H1 (cell line): ENCODE measurements at regions of chr3 and their contacts with region 1.

Region 1: GRCh38 chr3:50170689-50171088 is 15.6 kb downstream of the SEMA3F start:
- DNase-seq: no peak
- H3K4me3 ChIP-seq: no peak overlapping the region
- H3K27ac ChIP-seq: no peak overlapping the region
- H3K4me1 ChIP-seq: peaks cover 0 to 22% (median 13%) of the 10 kb centered on the region in 4 experiments; a peak in 6 of 7 replicates
- H3K27me3 ChIP-seq: no peaks in the 10 kb centered on the region
- CTCF ChIP-seq: no peak
- EP300 ChIP-seq: no peak
- POLR2A ChIP-seq: no peak
- RAD21 ChIP-seq: no peak

Region 2: DNA sequence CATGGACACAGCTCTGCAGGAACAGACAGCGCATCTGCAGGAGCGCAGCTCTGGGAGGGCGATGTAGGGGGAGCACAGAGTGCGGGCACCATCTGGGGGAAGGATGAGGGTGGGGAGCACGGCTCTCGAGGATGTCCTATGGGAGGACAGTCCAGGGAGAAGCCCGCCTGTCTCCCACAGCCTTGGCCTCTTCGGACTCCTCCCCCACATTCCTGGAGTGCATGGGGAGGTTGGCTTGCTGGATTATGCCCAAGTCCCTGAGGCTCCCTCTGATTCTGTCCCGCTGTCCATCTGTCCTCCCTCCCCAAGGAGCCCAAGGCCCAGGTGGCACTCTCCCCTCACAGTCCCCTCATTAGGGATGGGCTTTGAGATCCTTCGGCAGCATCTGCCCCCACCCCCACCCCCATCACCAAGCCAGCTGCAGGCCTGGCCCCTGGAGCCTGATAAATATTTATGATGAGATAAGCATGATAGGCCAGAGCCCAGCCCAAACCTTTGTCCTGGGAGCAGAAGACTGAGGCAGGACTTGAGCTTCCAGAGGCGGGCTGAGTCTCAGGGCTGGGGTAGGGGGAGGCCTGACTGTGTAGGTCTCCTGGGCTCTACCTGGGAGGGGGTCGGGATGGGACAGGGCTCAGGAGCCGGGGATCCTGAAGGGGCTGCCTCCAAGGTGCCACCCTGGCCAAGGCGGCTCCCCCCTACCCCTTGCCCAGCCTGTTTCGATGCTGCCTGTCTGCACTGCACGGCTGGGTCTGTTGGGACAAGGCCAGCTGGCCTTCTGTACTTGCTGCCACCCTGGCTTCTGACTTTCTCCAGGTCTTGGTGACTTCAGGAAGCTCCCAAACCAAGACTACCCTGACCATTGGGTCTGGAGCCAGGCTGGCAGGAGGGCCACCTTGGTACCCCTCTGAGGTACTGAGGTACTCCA is 44.1 kb before region 1 on chr3:
- CTCF ChIA-PET with region 1: interaction called, 190 read pairs
- POLR2A ChIA-PET with region 1: interaction called, 34 read pairs
- DNase-seq: peak in 1 of 2 experiments; percentile 58
- H3K4me3 ChIP-seq: no peak overlapping the region
- H3K27ac ChIP-seq: no peak overlapping the region; the same call in none of the 2 replicates
- H3K4me1 ChIP-seq: peaks cover 4 to 32% (median 23%) of the 10 kb centered on the region in 4 experiments
- H3K27me3 ChIP-seq: no peaks in the 10 kb centered on the region
- CTCF ChIP-seq: no peak
- EP300 ChIP-seq: no peak
- POLR2A ChIP-seq: no peak
- RAD21 ChIP-seq: no peak

Region 3: DNA sequence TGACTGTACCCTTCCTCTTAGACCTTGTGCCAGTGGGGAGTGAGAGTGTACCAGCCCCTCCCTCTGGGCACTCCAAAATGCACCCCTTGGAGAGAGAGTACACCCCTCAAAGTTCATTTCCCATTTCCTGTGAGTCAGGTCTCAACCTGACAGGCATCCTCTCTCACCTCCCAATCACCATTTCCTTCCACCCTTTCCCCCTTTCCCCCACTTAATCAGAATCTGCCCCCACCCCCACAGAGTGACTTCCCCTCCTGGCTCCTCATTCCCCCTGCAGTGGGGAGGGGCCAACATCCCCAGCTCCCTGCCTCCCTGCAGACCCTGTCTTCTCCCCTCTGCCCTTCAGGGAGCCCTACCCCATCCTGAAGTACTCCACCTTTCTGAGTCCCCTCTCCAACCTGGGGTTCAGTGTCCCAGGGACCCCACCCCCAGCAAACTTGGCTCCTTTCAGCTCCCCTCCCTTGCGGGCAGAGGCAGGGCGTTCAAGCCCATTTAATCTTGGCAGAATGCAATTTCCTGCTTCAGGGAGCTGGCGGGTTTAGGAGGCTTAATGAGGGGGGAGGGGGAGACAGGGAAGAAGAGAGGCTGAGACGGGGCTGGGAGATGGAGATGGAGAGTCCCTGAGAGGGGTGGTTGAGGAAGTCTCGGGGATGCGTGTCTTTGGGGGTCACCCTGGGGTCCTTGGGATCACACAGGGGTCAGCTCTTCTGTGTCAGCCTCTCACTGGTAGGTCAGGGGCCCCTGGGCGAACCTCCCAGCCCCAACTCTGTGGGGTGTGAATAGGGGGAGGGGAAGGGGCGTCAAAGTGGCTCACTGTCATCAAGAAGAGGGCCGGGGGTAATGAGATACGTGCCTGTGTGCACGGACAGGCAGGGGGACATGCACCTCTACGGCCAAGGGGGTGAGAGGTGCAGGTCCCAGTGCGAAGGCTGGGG is 32.2 kb before region 1 on chr3:
- CTCF ChIA-PET with region 1: interaction called, 12 read pairs
- POLR2A ChIA-PET with region 1: interaction called, 11 read pairs
- DNase-seq: peak in 1 of 2 experiments; percentile 71
- H3K4me3 ChIP-seq: peak overlapping the region in 3 of 4 experiments; percentile 17 to 45 (median 36); a peak in 3 of 8 replicates
- H3K27ac ChIP-seq: peak overlapping the region; percentile 41; the same call in 1 of the 2 replicates
- H3K4me1 ChIP-seq: peaks cover 4 to 32% (median 28%) of the 10 kb centered on the region in 4 experiments
- H3K27me3 ChIP-seq: no peaks in the 10 kb centered on the region; a peak in 1 of 7 replicates
- CTCF ChIP-seq: no peak
- EP300 ChIP-seq: no peak
- POLR2A ChIP-seq: no peak; a peak in 1 of 3 replicates
- RAD21 ChIP-seq: no peak

Region 4: DNA sequence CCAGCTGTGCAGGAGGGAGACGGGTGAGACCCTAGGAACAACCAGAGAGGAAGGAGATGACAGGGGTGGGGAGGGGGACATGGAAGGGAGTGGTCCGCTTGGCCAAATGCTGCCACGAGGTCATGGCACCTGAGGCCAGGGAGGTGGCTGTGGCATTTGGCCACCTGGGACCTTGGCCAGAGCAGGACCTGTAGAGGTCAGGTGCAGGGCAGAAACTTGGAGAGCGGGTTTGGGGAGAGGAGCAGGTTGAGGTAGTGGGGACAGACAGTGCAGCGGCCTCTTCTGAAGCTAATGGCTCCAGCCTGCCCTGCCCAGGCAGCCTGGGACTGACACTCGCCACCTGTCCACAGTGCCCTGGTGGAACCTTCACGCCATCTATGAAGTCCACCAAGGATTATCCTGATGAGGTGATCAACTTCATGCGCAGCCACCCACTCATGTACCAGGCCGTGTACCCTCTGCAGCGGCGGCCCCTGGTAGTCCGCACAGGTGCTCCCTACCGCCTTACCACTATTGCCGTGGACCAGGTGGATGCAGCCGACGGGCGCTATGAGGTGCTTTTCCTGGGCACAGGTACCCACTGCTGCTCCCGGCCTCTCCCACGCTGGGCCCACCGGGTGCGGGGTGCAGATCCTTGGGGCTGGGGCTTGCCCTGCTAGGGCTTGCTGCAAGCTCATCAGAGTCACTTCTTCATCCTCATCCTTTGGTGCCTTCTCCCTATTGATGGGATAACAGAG is 13.7 kb after region 1 on chr3:
- CTCF ChIA-PET with region 1: interaction called, 299 read pairs
- POLR2A ChIA-PET with region 1: interaction called, 6 read pairs
- DNase-seq: no peak
- H3K4me3 ChIP-seq: no peak overlapping the region
- H3K27ac ChIP-seq: no peak overlapping the region
- H3K4me1 ChIP-seq: no peaks in the 10 kb centered on the region
- H3K27me3 ChIP-seq: no peaks in the 10 kb centered on the region
- CTCF ChIP-seq: no peak
- EP300 ChIP-seq: no peak
- POLR2A ChIP-seq: no peak; a peak in 1 of 3 replicates
- RAD21 ChIP-seq: no peak